Endothelial cell of umbilical vein (primary cell): ENCODE measurements at regions of chr11 and their contacts with region 1.

Region 1: GRCh38 chr11:2532704-2533586 is 88.1 kb downstream of the KCNQ1 start:
- DNase-seq: peak; percentile 87
- H3K4me3 ChIP-seq: no peak overlapping the region
- H3K27ac ChIP-seq: no peak overlapping the region
- H3K4me1 ChIP-seq: peaks cover 9% of the 10 kb centered on the region
- H3K27me3 ChIP-seq: no peaks in the 10 kb centered on the region
- CTCF ChIP-seq: peak; percentile 99
- POLR2A ChIP-seq: no peak

Region 2: GRCh38 chr11:2305140-2305840 is 227.7 kb before region 1 on chr11:
- CTCF ChIA-PET with region 1: interaction called, 18 read pairs
- POLR2A ChIA-PET with region 1: no interaction called
- dilution Hi-C with region 1: no loop called
- intact Hi-C with region 1: loop called (anchors 1 kb)
- DNase-seq: peak; percentile 56
- H3K4me3 ChIP-seq: no peak overlapping the region
- H3K27ac ChIP-seq: no peak overlapping the region
- H3K4me1 ChIP-seq: peaks cover 7% of the 10 kb centered on the region
- H3K27me3 ChIP-seq: no peaks in the 10 kb centered on the region
- CTCF ChIP-seq: peak; percentile 85 to 98
- POLR2A ChIP-seq: no peak

Region 3: DNA sequence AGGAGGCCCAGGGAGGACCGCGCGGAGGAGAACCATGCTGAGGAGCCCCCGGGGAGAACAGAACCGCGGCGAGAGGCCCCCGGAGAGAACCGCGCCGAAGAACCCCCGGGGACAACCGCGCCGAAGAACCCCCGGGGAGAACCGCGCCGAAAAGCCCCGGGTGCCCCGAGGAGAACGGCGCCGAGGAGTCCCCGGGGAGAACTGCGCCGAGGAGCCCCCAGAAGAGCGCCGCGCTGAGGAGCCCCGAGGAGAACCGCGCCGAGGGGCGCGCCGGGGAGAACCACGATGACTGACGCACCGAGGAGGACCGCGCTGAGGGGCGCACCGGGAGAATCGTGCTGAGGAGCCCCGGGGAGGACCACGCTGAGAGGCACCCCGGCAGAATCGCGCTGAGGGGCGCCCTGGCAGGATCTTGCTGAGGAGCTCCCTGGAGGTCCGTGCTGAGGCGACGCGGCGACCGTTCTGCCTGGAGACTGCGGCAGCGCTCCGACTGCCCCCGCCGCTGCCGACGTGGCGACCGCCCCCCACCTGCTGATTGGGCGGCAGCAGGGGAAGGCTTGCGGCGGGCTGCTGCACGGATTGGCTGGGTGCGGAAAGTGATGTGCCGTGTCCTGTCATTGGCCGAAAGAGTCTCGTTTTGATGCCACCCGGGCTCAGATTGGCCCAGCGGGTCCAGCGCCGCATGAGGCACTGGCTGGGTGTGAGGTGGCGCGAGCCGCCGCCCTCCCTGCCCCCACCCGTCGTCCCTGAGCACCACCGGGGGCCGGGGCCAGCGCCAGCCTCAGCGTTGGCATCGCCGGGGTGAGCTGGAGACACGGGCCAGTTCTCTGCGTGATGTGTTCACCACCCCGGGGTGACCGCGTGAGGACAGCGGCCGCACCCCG is 166.8 kb after region 1 on chr11 and contains the start of gene KCNQ1OT1:
- CTCF ChIA-PET with region 1: no interaction called
- POLR2A ChIA-PET with region 1: no interaction called
- dilution Hi-C with region 1: no loop called
- intact Hi-C with region 1: loop called (anchors 2 kb)
- DNase-seq: peak; percentile 98
- H3K4me3 ChIP-seq: peak within 1 kb of the TSS; percentile 44 to 69 (median 53)
- H3K27ac ChIP-seq: peak within 1 kb of the TSS; percentile 60
- H3K4me1 ChIP-seq: peaks cover 5% of the 10 kb centered on the region
- H3K27me3 ChIP-seq: no peaks in the 10 kb centered on the region
- CTCF ChIP-seq: no peak
- POLR2A ChIP-seq: peak; percentile 99
- total RNA-seq, gene KCNQ1OT1: 1.5 and 1.8 TPM in 2 replicates

Region 4: DNA sequence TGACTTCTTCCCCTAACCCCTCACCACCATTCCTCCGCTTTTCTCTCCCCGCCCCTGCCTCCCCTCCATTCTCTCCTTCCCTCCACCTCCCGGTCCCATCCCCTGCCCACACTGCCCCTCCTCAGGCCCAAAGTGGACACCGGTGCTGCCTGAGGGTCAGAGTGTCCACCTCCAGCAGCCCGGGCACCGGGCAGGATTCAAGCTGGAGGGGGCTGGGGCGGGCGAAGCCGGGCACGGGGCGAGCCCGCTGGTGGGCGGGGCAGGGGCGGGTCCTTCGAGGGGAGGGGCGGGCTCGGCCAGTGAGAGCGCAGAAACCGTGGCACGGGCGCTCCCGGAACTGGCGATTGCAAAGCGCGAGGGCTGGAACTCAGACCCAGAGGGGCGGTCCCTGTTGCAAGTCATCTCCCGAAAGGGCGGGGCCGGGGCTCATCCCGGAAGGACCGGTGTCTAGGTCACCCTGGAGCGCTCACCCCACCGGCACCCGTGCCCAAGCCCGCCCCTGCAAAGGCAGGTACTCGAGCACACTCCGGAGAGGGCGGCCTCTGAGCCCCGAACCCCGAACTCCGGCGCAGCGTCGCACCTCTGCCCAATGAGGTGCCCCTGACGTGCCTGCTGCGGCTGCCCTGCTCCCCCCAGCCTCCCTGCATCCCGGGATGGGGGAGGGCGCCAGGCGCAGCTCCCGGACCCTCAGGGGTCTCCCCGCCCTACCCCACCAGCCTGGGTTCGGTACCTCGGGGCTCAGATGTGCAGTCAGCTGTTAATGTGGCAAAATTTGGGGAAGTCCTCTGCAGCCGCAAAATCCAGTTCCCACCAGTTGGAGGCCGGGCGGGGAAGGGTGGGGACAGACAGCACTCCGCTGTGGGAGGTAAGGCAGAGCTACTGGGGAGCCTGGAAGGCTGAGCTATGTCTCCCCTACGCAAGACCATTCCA is 369.2 kb after region 1 on chr11:
- CTCF ChIA-PET with region 1: interaction called, 12 read pairs
- POLR2A ChIA-PET with region 1: interaction called, 3 read pairs
- dilution Hi-C with region 1: no loop called
- intact Hi-C with region 1: no loop called
- DNase-seq: peak; percentile 72
- H3K4me3 ChIP-seq: peak overlapping the region; percentile 18 to 46 (median 37)
- H3K27ac ChIP-seq: no peak overlapping the region
- H3K4me1 ChIP-seq: peaks cover 26% of the 10 kb centered on the region
- H3K27me3 ChIP-seq: peaks cover 0 to 2% of the 10 kb centered on the region in 2 experiments
- CTCF ChIP-seq: no peak
- POLR2A ChIP-seq: peak; percentile 21

Region 5: GRCh38 chr11:2951231-2952110 is 418.5 kb after region 1 on chr11:
- CTCF ChIA-PET with region 1: interaction called, 5 read pairs
- POLR2A ChIA-PET with region 1: no interaction called
- dilution Hi-C with region 1: no loop called
- intact Hi-C with region 1: loop called (anchors 2 kb)
- DNase-seq: peak; percentile 74
- H3K4me3 ChIP-seq: peak overlapping the region in 1 of 3 experiments; percentile 24
- H3K27ac ChIP-seq: peak overlapping the region; percentile 81
- H3K4me1 ChIP-seq: peaks cover 35% of the 10 kb centered on the region
- H3K27me3 ChIP-seq: no peaks in the 10 kb centered on the region
- CTCF ChIP-seq: no peak
- POLR2A ChIP-seq: peak; percentile 42

Region 6: DNA sequence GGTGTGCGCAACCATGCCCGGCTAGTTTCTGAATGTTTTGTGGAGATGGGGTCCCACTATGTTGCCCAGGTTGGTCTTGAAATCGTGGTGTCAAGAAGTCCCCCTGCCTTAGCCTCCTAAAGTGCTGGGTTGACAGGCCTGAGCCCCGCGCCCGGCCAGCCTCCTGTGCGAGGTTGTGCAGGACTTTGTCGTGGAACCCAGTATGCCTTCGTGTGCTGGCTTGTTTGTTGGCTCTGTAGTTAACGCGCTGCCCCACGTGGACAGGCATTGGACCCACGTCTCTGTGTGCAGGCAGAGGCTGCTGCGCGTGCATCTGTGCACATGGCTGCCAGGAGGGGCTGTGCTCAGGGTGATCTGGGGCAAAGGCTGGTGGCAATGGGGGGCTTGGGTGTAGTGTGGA is 879.9 kb after region 1 on chr11:
- CTCF ChIA-PET with region 1: interaction called, 21 read pairs
- POLR2A ChIA-PET with region 1: no interaction called
- dilution Hi-C with region 1: no loop called
- intact Hi-C with region 1: loop called (anchors 5 kb)
- DNase-seq: no peak
- H3K4me3 ChIP-seq: no peak overlapping the region
- H3K27ac ChIP-seq: no peak overlapping the region
- H3K4me1 ChIP-seq: no peaks in the 10 kb centered on the region
- H3K27me3 ChIP-seq: no peaks in the 10 kb centered on the region
- CTCF ChIP-seq: no peak
- POLR2A ChIP-seq: no peak